CD8-positive, alpha-beta T cell (primary cell): ENCODE measurements at regions of chr20 and their contacts with region 1.

Region 1: DNA sequence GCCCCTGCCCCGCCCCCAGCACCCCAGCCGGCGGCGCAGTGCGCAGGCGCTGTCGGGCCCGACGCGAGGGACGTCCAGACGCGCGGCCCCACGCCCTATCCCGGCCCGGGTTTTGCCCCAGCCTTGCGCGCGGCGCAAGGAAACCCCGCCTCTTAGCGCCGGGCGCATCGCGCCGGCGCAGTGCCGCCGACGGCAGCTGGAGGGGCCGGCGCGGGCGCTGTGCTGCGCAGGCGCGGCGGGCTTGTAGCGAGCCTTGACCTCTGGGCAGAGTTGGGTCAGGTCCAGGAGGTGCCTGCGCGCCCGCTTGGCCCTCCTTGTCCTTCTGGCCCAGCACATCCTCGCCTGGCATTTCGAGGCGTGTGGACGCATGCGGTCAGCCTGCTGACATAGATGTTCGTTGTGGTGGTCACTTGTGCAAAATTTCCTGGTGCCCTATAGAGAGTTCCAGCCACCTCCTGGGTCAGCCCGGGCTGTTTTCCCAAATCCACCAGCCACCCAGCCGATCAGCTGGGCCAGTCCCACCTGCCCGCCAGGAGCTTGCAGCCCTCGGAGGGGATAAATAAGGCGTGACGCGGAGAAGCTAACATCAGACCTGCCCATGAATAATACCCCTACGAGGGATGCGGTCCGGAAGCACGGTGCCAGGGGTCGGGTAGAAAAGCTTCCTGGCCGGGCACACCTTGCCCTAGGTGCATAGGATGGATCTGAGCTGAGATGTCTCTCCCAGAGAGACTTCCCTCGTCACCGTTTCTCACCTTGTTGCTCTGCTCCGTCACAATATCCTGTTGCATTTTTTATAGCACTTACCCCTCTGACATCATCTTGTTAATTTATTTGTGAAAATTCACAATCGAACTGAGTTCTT is 442 bp upstream of the PRELID3B start:
- DNase-seq: peak; percentile 88 to 97 (median 94)
- ATAC-seq: peak; percentile 92
- H3K4me3 ChIP-seq: peak overlapping the region; percentile 67 to 94
- H3K4me3 Mint-ChIP-seq: peak overlapping the region; percentile 90
- H3K27ac ChIP-seq: peak overlapping the region; percentile 74 to 92
- H3K27ac Mint-ChIP-seq: peak overlapping the region; percentile 93
- H3K4me1 ChIP-seq: peaks cover 48% of the 10 kb centered on the region
- H3K4me1 Mint-ChIP-seq: peaks cover 52% of the 10 kb centered on the region
- H3K27me3 ChIP-seq: no peaks in the 10 kb centered on the region
- H3K27me3 Mint-ChIP-seq: no peaks in the 10 kb centered on the region
- CTCF ChIP-seq: no peak

Region 2: DNA sequence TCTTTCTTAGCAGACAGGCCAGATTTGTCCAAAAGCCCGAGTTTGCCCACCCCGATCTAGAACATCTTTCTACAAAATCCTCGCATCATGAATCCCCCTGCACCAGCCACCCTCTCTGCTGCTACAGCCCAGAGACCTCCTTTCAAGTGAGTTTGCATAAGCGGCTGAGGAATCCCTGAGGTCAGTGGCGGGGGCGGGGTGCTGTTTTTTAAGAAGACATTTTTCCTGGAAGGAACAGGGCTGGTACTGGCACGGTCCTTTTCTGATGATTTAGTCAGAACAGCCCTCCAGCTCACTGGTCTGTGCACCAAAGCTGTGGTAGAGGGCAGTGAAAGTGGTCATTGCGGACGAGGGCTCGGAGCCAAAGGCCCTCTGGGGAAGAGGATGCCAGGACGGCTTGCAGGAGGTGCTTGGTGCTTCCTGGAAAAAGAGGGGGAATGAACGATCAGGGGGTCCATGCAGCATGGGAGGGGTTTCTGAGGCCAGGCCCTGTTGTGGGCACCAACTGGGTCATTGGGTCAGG is 242.8 kb before region 1 on chr20:
- CTCF ChIA-PET with region 1: no interaction called
- POLR2A ChIA-PET with region 1: no interaction called
- intact Hi-C with region 1: no loop called
- DNase-seq: no peak
- ATAC-seq: no peak
- H3K4me3 ChIP-seq: no peak overlapping the region
- H3K4me3 Mint-ChIP-seq: no peak overlapping the region
- H3K27ac ChIP-seq: no peak overlapping the region
- H3K27ac Mint-ChIP-seq: no peak overlapping the region
- H3K4me1 ChIP-seq: no peaks in the 10 kb centered on the region
- H3K4me1 Mint-ChIP-seq: no peaks in the 10 kb centered on the region
- H3K27me3 ChIP-seq: peaks cover 0 to 3% of the 10 kb centered on the region in 2 experiments
- H3K27me3 Mint-ChIP-seq: peaks cover 14% of the 10 kb centered on the region
- CTCF ChIP-seq: no peak

Region 3: DNA sequence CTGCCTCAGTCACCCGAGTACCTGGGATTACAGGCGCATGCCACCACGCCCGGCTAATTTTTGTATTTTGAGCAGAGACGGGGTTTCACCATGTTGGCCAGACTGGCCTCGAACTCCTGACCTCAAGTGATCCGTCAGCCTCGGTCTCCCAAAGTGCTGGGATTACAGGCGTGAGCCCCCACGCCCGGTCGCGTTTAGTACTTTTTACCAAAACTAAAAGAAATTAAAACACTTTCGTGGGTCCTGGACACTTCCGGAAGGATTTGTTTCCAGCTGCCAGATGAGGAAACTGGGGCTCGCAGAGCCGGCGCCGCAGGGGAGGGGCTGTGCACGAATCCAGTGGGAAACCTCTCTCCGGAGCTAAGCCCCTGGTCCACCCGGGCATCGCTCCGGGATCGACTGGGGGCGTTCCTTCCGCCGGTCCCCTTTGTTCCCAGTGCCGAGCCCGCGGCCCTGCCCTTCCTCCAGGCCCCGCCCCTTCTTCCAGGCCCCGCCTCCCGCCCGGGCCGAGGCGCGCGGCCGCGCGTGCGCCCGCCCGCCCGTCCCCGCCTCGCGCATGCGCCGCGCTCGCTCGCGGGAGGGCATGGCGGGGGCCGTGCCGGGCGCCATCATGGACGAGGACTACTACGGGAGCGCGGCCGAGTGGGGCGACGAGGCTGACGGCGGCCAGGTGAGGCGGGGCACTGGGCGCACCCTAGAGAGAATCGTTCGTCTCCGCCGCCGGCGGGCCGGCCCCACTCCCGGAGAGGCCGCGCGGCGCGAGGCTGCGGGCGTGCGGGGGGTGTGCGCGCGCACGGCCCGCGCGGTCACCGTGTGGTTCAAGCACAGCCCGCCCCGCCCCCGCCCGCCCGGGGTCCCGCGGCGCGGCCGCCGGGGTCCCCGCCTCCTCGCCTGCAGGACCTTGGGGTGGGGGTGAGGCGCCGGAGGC is 62.1 kb before region 1 on chr20 and contains the start of gene NELFCD:
- CTCF ChIA-PET with region 1: interaction called, 4 read pairs
- POLR2A ChIA-PET with region 1: interaction called, 4 read pairs
- intact Hi-C with region 1: loop called (anchors 1 to 2 kb)
- DNase-seq: peak; percentile 81 to 94 (median 89)
- ATAC-seq: peak; percentile 87
- H3K4me3 ChIP-seq: peak within 1 kb of the TSS; percentile 77 to 93
- H3K4me3 Mint-ChIP-seq: peak within 1 kb of the TSS; percentile 93
- H3K27ac ChIP-seq: peak within 1 kb of the TSS; percentile 62 to 66
- H3K27ac Mint-ChIP-seq: peak within 1 kb of the TSS; percentile 94
- H3K4me1 ChIP-seq: peaks cover 29% of the 10 kb centered on the region
- H3K4me1 Mint-ChIP-seq: peaks cover 39% of the 10 kb centered on the region
- H3K27me3 ChIP-seq: no peaks in the 10 kb centered on the region
- H3K27me3 Mint-ChIP-seq: no peaks in the 10 kb centered on the region
- CTCF ChIP-seq: no peak
- total RNA-seq, gene NELFCD: 101 to 113 TPM

Region 4: DNA sequence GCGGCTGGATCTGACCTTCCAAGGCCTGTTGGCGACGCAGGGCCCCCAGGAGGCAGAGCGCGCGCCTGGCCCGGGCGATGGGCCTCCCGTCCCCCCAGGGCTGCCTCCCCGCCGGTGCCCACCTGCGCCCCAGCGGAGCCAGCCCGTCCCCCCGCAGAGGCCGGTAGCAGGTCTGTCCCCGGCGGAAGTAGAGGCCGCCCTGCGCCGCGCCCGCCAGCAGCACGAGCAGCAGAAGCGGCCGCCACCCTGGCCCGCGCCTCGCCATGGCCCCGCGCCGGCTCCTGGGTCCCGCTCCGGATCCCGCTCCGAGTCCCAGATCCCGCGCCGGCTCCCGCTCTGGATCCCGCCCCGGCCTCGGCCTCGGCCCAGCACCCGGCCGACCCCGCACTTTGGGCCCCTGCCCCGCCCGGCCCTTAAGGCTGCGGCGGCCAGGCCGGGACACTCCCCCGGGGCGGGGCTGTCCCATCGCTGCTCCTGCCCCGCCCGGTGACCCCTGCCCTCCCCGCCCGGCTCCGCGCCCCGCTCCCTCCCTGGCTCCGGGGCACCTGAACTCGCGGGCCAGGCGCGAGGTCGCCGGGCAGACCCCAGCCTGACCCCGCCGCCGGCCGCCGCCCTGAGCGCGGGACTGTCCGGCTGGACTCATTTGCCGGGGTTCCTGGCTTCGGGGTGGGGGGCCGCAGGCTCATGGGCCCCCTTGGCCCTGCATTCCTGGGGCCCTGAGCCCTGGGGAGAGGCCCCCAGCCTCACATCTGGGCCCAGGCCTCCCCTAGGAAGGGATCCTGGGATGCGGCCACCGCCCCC is 36.0 kb before region 1 on chr20 and contains the start of gene CTSZ:
- CTCF ChIA-PET with region 1: no interaction called
- POLR2A ChIA-PET with region 1: no interaction called
- intact Hi-C with region 1: loop called in 1 of 2 experiments (anchors 1 kb)
- DNase-seq: peak in 6 of 9 experiments; percentile 28 to 69 (median 48)
- ATAC-seq: peak; percentile 54
- H3K4me3 ChIP-seq: peak within 1 kb of the TSS; percentile 48 to 60
- H3K4me3 Mint-ChIP-seq: peak within 1 kb of the TSS; percentile 72
- H3K27ac ChIP-seq: no peak within 1 kb of the TSS
- H3K27ac Mint-ChIP-seq: no peak within 1 kb of the TSS
- H3K4me1 ChIP-seq: peaks cover 36% of the 10 kb centered on the region
- H3K4me1 Mint-ChIP-seq: peaks cover 35% of the 10 kb centered on the region
- H3K27me3 ChIP-seq: no peaks in the 10 kb centered on the region
- H3K27me3 Mint-ChIP-seq: no peaks in the 10 kb centered on the region
- CTCF ChIP-seq: no peak
- total RNA-seq, gene CTSZ: 5.1 to 7.0 TPM

Region 5: GRCh38 chr20:59149651-59150504 is 106.8 kb after region 1 on chr20:
- CTCF ChIA-PET with region 1: no interaction called
- POLR2A ChIA-PET with region 1: no interaction called
- intact Hi-C with region 1: loop called in 1 of 2 experiments (anchors 5 kb)
- DNase-seq: peak; percentile 66 to 96 (median 77)
- ATAC-seq: peak; percentile 74
- H3K4me3 ChIP-seq: peak overlapping the region in 1 of 2 experiments; percentile 21
- H3K4me3 Mint-ChIP-seq: peak overlapping the region; percentile 71
- H3K27ac ChIP-seq: peak overlapping the region; percentile 90 to 94
- H3K27ac Mint-ChIP-seq: peak overlapping the region; percentile 95
- H3K4me1 ChIP-seq: peaks cover 94% of the 10 kb centered on the region
- H3K4me1 Mint-ChIP-seq: peaks cover 94% of the 10 kb centered on the region
- H3K27me3 ChIP-seq: no peaks in the 10 kb centered on the region
- H3K27me3 Mint-ChIP-seq: no peaks in the 10 kb centered on the region
- CTCF ChIP-seq: no peak